ENCODE measurements at regions of chr14 and their contacts with region 1.

Region 1: GRCh38 chr14:22039938-22040775 is 366.5 kb upstream of the OR4E1 start:
- DNase-seq: peak; percentile 32
- H3K4me3 ChIP-seq: no peak overlapping the region
- H3K27ac ChIP-seq: no peak overlapping the region
- H3K4me1 ChIP-seq: no peaks in the 10 kb centered on the region
- H3K27me3 ChIP-seq: peaks cover 4 to 5% of the 10 kb centered on the region in 2 experiments
- CTCF ChIP-seq: peak; percentile 51 to 60
- POLR2A ChIP-seq: no peak

Region 2: GRCh38 chr14:22002860-22003309 is 37.3 kb before region 1 on chr14:
- CTCF ChIA-PET with region 1: interaction called, 10 read pairs
- POLR2A ChIA-PET with region 1: no interaction called
- dilution Hi-C with region 1: no loop called
- intact Hi-C with region 1: no loop called
- DNase-seq: no peak
- H3K4me3 ChIP-seq: no peak overlapping the region
- H3K27ac ChIP-seq: no peak overlapping the region
- H3K4me1 ChIP-seq: no peaks in the 10 kb centered on the region
- H3K27me3 ChIP-seq: no peaks in the 10 kb centered on the region
- CTCF ChIP-seq: peak; percentile 45 to 48
- POLR2A ChIP-seq: no peak

Region 3: DNA sequence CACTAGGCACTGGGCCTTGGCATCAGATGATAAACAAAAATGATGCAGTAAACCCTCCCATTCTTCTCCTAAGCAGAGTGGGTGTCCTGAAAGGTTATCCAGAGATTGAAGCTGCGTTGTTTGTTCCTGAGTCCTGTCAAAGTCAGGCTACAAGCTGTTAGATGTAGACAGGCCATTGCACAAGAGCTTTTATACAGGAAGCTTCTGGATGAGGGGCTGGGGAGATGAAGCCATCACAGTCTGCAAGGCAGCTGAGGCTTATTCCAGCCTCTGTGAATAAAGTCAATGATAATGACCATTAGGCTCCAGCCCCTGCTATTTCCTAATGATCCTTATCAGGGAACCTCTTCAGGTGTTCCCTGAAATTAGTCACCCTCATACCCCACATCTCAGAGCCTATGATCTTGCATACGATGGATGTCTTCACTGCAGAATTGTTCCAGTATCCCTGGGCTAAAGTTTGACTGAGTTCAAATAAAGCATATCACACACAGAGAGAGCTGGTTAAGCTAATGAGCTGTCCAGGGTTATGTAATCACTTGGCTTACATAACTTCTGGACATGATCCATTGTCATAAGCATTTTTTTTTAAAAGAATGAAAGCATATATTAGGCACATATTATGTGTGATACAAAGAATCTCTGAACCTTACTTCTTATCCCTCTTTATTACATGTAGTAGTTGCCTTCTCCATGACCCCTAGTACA is 29.5 kb before region 1 on chr14:
- CTCF ChIA-PET with region 1: interaction called, 11 read pairs
- POLR2A ChIA-PET with region 1: no interaction called
- dilution Hi-C with region 1: no loop called
- intact Hi-C with region 1: no loop called
- DNase-seq: no peak
- H3K4me3 ChIP-seq: no peak overlapping the region
- H3K27ac ChIP-seq: no peak overlapping the region
- H3K4me1 ChIP-seq: no peaks in the 10 kb centered on the region
- H3K27me3 ChIP-seq: peaks cover 2 to 11% of the 10 kb centered on the region in 2 experiments
- CTCF ChIP-seq: no peak
- POLR2A ChIP-seq: no peak

Region 4: DNA sequence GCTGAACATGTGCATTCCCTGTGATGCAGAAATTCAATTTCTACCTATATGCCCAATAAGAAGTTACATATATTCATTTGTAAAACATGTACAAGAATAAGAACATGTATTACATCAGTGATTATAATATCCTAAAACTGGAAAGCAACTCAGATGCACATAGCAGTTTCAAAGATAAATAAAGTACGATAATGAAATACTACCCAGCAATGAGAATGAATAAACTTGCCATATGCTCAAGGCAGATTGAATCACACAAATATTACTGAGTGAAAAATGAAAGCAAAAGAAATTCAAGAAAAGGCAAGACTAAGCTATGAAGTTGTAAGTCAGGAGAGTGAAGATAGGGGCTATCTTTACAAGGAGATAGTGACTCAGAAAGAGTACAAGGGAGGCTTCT is 21.3 kb before region 1 on chr14:
- CTCF ChIA-PET with region 1: interaction called, 12 read pairs
- POLR2A ChIA-PET with region 1: no interaction called
- dilution Hi-C with region 1: no loop called
- intact Hi-C with region 1: no loop called
- DNase-seq: no peak
- H3K4me3 ChIP-seq: no peak overlapping the region
- H3K27ac ChIP-seq: no peak overlapping the region
- H3K4me1 ChIP-seq: no peaks in the 10 kb centered on the region
- H3K27me3 ChIP-seq: peaks cover 1 to 35% of the 10 kb centered on the region in 2 experiments
- CTCF ChIP-seq: no peak
- POLR2A ChIP-seq: no peak

Region 5: GRCh38 chr14:22026527-22026926 is 13.6 kb before region 1 on chr14:
- CTCF ChIA-PET with region 1: interaction called, 10 read pairs
- POLR2A ChIA-PET with region 1: no interaction called
- dilution Hi-C with region 1: no loop called
- intact Hi-C with region 1: no loop called
- DNase-seq: no peak
- H3K4me3 ChIP-seq: no peak overlapping the region
- H3K27ac ChIP-seq: no peak overlapping the region
- H3K4me1 ChIP-seq: no peaks in the 10 kb centered on the region
- H3K27me3 ChIP-seq: peaks cover 6 to 31% of the 10 kb centered on the region in 2 experiments
- CTCF ChIP-seq: no peak
- POLR2A ChIP-seq: no peak

Region 6: GRCh38 chr14:22084393-22085281 is 44.5 kb after region 1 on chr14:
- CTCF ChIA-PET with region 1: interaction called, 13 read pairs
- POLR2A ChIA-PET with region 1: no interaction called
- dilution Hi-C with region 1: no loop called
- intact Hi-C with region 1: no loop called
- DNase-seq: peak; percentile 67
- H3K4me3 ChIP-seq: no peak overlapping the region
- H3K27ac ChIP-seq: no peak overlapping the region
- H3K4me1 ChIP-seq: peaks cover 4% of the 10 kb centered on the region
- H3K27me3 ChIP-seq: peaks cover 0 to under 1% of the 10 kb centered on the region in 2 experiments
- CTCF ChIP-seq: peak; percentile 47 to 60
- POLR2A ChIP-seq: no peak

Measured in endothelial cell of umbilical vein (primary cell).